Ovary (tissue), 10 donors: ENCODE measurements at regions of chr5 and their contacts with region 1.

Region 1: GRCh38 chr5:179345433-179346321 is at the start of gene ADAMTS2:
- DNase-seq: peak; percentile 73 to 81 (median 80)
- H3K4me3 ChIP-seq: peak within 1 kb of the TSS; percentile 55
- H3K27ac ChIP-seq: peak within 1 kb of the TSS; percentile 53 to 61
- H3K4me1 ChIP-seq: peaks cover 11% of the 10 kb centered on the region
- H3K27me3 ChIP-seq: no peaks in the 10 kb centered on the region
- CTCF ChIP-seq: no peak
- EP300 ChIP-seq: no peak
- POLR2A ChIP-seq: no peak
- total RNA-seq, gene ADAMTS2: 7.9 to 31.8 (median 11.5) TPM

Region 2: GRCh38 chr5:178859625-178860531 is 485.8 kb before region 1 on chr5 and contains the start of gene ZNF354B:
- intact Hi-C with region 1: loop called in 1 of 4 experiments (anchors 5 kb)
- DNase-seq: peak; percentile 84 to 89 (median 86)
- H3K4me3 ChIP-seq: peak within 1 kb of the TSS; percentile 76
- H3K27ac ChIP-seq: peak within 1 kb of the TSS; percentile 71 to 84
- H3K4me1 ChIP-seq: peaks cover 2% of the 10 kb centered on the region
- H3K27me3 ChIP-seq: no peaks in the 10 kb centered on the region
- CTCF ChIP-seq: no peak
- EP300 ChIP-seq: no peak
- POLR2A ChIP-seq: peak; percentile 50
- total RNA-seq, gene ZNF354B: 15.0 to 21.8 (median 16.3) TPM

Region 3: GRCh38 chr5:179166886-179167841 is 178.5 kb before region 1 on chr5:
- intact Hi-C with region 1: loop called (anchors 2 to 5 kb)
- DNase-seq: peak; percentile 69 to 83 (median 76)
- H3K4me3 ChIP-seq: peak overlapping the region; percentile 16
- H3K27ac ChIP-seq: no peak overlapping the region
- H3K4me1 ChIP-seq: no peaks in the 10 kb centered on the region
- H3K27me3 ChIP-seq: no peaks in the 10 kb centered on the region
- CTCF ChIP-seq: peak; percentile 79 to 97 (median 96)
- EP300 ChIP-seq: no peak
- POLR2A ChIP-seq: no peak

Region 4: DNA sequence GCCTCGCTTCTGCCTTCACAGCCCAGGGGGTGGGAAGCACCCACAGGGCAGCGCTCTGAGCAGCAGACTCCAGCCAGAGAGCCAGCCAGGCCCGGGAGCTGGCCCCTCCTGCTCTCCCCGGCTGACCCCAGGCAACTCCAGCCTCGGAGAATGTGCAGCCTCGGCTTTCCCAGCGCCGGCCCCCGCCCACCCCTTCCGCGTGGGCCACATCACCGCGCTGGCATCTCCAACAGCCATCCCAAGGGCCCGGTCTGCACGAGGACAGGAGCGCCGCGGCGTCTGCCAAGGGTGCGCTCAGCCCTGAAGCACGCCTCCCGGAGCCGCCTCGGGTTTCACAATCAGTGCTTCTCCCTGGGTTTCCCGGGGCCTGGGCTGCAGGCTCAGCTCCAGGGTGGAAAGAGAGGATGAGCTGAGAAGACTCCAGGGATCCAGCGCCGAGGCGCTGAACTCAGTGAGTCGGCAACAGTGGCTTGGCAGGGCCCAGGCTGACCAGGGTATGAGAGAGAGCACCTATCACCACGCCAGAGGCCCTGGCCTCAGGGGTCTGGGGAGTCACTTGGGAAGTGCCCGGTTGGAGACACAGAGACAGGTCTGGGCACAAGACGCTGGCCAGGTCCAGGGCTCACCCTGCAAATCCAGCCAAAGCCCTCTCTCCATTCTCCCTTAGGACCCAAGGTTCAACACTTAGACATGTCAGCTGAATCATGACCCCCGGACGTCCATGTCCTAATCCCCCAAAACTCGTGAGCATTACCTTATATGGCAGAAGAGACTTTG is 80.0 kb before region 1 on chr5:
- intact Hi-C with region 1: loop called in 1 of 4 experiments (anchors 5 kb)
- DNase-seq: peak; percentile 94 to 97 (median 96)
- H3K4me3 ChIP-seq: no peak overlapping the region
- H3K27ac ChIP-seq: peak overlapping the region; percentile 60 to 64
- H3K4me1 ChIP-seq: peaks cover 47% of the 10 kb centered on the region
- H3K27me3 ChIP-seq: no peaks in the 10 kb centered on the region
- CTCF ChIP-seq: no peak
- EP300 ChIP-seq: peak; percentile 63
- POLR2A ChIP-seq: no peak

Region 5: DNA sequence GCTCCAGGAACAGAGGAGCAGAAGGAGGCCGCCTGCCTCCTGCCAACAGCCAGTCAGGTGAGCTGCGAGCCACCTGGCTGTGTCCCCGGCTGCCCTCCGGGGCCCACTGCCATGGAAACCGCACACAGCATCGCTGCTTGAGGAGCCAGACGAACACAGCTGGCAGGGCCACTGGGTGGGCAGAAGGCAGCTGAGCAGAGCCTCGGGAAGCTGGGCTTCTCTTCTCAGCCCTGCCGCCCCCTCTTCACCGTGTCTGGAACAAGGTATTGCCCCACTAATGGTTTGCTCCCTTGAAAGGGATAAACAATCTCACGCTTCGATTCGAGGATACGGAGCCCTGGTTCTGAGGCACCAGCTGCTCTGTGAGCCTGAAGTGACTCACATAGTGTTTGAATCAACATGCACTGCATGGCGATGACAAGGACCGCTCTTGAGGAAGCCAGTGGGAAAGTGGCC is 140.9 kb after region 1 on chr5:
- intact Hi-C with region 1: loop called in 1 of 4 experiments (anchors 10 kb)
- DNase-seq: no peak
- H3K4me3 ChIP-seq: no peak overlapping the region
- H3K27ac ChIP-seq: no peak overlapping the region
- H3K4me1 ChIP-seq: no peaks in the 10 kb centered on the region
- H3K27me3 ChIP-seq: no peaks in the 10 kb centered on the region
- CTCF ChIP-seq: no peak
- EP300 ChIP-seq: no peak
- POLR2A ChIP-seq: no peak

Region 6: GRCh38 chr5:179495906-179496455 is 150.3 kb after region 1 on chr5:
- intact Hi-C with region 1: loop called in 1 of 4 experiments (anchors 5 kb)
- DNase-seq: no peak
- H3K4me3 ChIP-seq: no peak overlapping the region
- H3K27ac ChIP-seq: no peak overlapping the region
- H3K4me1 ChIP-seq: no peaks in the 10 kb centered on the region
- H3K27me3 ChIP-seq: no peaks in the 10 kb centered on the region
- CTCF ChIP-seq: no peak
- EP300 ChIP-seq: no peak
- POLR2A ChIP-seq: no peak